Naive thymus-derived CD4-positive, alpha-beta T cell (primary cell): ENCODE measurements at regions of chr12 and their contacts with region 1.

Region 1: DNA sequence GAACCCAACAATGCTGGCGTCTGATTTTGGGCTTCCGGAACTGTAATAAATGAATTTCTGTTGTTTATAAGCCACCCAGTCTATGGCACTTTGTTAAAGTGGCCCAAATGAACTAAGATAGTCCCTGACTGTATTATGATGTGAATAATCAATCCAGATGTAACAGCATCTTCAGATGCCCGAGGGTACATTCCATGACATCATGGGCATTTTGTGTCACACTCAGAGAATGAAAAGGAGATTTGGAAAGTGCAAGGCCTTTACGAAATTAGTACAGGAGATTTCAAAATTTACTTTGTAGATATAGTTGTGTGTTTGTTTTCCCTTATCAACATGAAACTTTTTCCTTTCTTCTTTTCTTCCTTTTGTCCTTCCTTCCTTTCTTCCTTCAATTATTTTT is 54.2 kb upstream of the AMIGO2 start:
- DNase-seq: no peak
- ATAC-seq: no peak
- H3K4me3 ChIP-seq: no peak overlapping the region
- H3K4me3 Mint-ChIP-seq: no peak overlapping the region
- H3K27ac ChIP-seq: no peak overlapping the region
- H3K27ac Mint-ChIP-seq: peak overlapping the region in 6 of 9 donors; percentile 7 to 42 (median 33)
- H3K4me1 ChIP-seq: no peaks in the 10 kb centered on the region
- H3K4me1 Mint-ChIP-seq: peaks cover 0 to 21% (median 5%) of the 10 kb centered on the region in 7 donors
- H3K27me3 ChIP-seq: no peaks in the 10 kb centered on the region
- H3K27me3 Mint-ChIP-seq: no peaks in the 10 kb centered on the region

Region 2: DNA sequence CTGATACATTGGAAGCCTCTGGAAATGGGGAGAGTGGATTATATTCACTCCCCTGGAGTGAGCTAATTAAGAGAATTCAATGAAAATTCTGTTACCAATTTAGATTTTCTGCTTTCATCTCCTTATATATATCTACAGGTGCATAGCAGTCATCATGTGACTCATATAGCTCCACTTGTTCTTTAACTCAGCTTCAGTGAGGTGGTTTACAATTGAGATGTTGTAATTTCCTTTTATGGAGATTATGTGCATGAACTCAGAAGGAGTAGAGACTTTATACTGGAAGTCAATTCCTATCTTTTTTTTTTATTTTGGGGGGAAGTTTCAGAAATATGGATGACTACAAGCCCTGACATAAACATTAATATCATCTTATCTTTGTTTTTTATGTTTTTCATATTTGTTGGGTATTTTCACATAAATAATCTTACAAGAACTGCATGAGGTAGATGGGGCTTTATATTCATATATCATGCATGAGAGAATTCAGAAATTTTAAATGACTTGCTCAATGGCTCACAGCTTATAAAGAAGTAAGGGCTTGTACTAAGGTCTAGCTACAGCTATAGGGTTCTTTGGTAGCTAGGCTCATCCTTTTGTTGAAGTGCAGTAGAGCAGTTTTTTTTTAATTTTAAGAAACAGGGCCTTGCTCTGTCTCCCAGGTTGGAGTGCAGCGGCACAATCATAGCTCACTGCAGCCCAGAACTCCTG is 1051.3 kb before region 1 on chr12:
- CTCF ChIA-PET with region 1: no interaction called
- POLR2A ChIA-PET with region 1: no interaction called
- intact Hi-C with region 1: no loop called
- DNase-seq: no peak
- ATAC-seq: no peak
- H3K4me3 ChIP-seq: no peak overlapping the region
- H3K4me3 Mint-ChIP-seq: no peak overlapping the region
- H3K27ac ChIP-seq: no peak overlapping the region
- H3K27ac Mint-ChIP-seq: no peak overlapping the region
- H3K4me1 ChIP-seq: no peaks in the 10 kb centered on the region
- H3K4me1 Mint-ChIP-seq: no peaks in the 10 kb centered on the region
- H3K27me3 ChIP-seq: no peaks in the 10 kb centered on the region
- H3K27me3 Mint-ChIP-seq: peaks cover 0 to 19% (median 5%) of the 10 kb centered on the region in 5 donors

Region 3: DNA sequence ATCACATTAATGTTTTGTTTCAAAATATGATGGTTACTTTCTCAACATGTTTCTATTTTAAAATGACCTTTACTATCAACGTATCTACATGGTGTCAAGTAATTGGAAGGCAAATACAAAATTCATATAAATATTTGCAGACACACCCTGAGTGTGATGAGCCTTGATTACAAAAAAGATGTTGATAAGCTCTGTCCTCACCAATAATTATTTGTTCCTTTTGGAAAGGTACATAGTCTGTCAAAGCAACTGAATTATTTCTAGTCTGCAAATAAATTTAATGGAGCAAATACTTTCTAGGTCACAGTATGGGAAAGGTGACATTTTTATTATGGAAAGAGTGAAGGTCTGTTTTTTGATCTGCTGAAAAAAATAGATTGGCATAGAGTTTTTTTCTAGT is 17.9 kb before region 1 on chr12:
- CTCF ChIA-PET with region 1: no interaction called
- POLR2A ChIA-PET with region 1: no interaction called
- intact Hi-C with region 1: no loop called
- DNase-seq: no peak
- ATAC-seq: no peak
- H3K4me3 ChIP-seq: no peak overlapping the region
- H3K4me3 Mint-ChIP-seq: no peak overlapping the region
- H3K27ac ChIP-seq: no peak overlapping the region
- H3K27ac Mint-ChIP-seq: no peak overlapping the region
- H3K4me1 ChIP-seq: peaks cover 10% of the 10 kb centered on the region in 2 donors
- H3K4me1 Mint-ChIP-seq: peaks cover 7 to 29% (median 22%) of the 10 kb centered on the region in 7 donors
- H3K27me3 ChIP-seq: no peaks in the 10 kb centered on the region
- H3K27me3 Mint-ChIP-seq: no peaks in the 10 kb centered on the region

Region 4: DNA sequence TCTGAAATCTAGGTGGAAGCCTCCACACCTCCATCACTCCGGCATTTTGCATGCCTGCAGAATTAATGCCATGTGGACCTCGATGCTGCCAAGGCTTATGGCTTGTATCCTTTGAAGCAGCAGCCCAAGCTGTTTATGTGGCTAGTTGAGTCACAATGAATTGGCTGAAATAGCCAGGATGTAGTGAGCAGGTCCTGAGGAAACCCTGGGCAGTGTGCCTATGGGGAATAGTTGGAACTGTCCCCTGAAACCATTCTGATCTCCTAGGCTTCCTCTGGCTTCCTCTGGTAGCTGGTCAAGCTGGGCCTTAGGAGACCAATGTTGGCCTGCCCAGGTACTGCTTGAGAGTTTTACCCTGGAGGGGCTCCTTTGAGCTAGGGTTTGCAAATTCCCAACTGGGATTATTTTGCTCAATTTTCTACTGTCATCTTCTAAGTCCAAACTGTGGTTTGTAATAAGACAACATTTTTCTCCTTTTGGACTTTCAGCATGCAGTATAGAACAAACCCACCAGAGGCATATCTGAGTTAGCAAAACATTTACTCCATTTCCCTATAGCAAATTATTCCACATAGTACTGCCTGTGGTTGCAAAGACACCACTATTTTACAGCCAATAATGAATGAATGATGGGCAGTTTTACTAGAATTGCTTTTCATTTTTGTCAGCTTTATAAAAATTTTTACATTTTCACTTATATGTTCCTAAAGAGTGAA is 30.9 kb after region 1 on chr12:
- CTCF ChIA-PET with region 1: no interaction called
- POLR2A ChIA-PET with region 1: no interaction called
- intact Hi-C with region 1: loop called in 1 of 2 experiments (anchors 5 kb)
- DNase-seq: no peak
- ATAC-seq: no peak
- H3K4me3 ChIP-seq: no peak overlapping the region
- H3K4me3 Mint-ChIP-seq: no peak overlapping the region
- H3K27ac ChIP-seq: no peak overlapping the region
- H3K27ac Mint-ChIP-seq: no peak overlapping the region
- H3K4me1 ChIP-seq: no peaks in the 10 kb centered on the region
- H3K4me1 Mint-ChIP-seq: peaks cover 3 to 66% (median 35%) of the 10 kb centered on the region in 7 donors
- H3K27me3 ChIP-seq: no peaks in the 10 kb centered on the region
- H3K27me3 Mint-ChIP-seq: no peaks in the 10 kb centered on the region